Keratinocyte (primary cell): ENCODE measurements at regions of chr21 and their contacts with region 1.

Region 1: GRCh38 chr21:33412832-33413519 is 9.8 kb downstream of the IFNGR2 start:
- DNase-seq: no peak
- H3K4me3 ChIP-seq: no peak overlapping the region
- H3K27ac ChIP-seq: no peak overlapping the region
- H3K4me1 ChIP-seq: peaks cover 14% of the 10 kb centered on the region
- H3K27me3 ChIP-seq: no peaks in the 10 kb centered on the region
- CTCF ChIP-seq: no peak

Region 2: GRCh38 chr21:33355355-33355754 is 57.6 kb before region 1 on chr21:
- dilution Hi-C with region 1: loop called (anchors 10 kb)
- DNase-seq: no peak
- H3K4me3 ChIP-seq: no peak overlapping the region
- H3K27ac ChIP-seq: no peak overlapping the region
- H3K4me1 ChIP-seq: no peaks in the 10 kb centered on the region
- H3K27me3 ChIP-seq: no peaks in the 10 kb centered on the region
- CTCF ChIP-seq: no peak

Region 3: GRCh38 chr21:33451634-33452071 is 38.7 kb after region 1 on chr21:
- dilution Hi-C with region 1: no loop called
- DNase-seq: no peak
- H3K4me3 ChIP-seq: no peak overlapping the region
- H3K27ac ChIP-seq: no peak overlapping the region
- H3K4me1 ChIP-seq: peaks cover 10% of the 10 kb centered on the region
- H3K27me3 ChIP-seq: no peaks in the 10 kb centered on the region
- CTCF ChIP-seq: no peak